B cell (primary cell): ENCODE measurements at regions of chr12 and their contacts with region 1.

Region 1: DNA sequence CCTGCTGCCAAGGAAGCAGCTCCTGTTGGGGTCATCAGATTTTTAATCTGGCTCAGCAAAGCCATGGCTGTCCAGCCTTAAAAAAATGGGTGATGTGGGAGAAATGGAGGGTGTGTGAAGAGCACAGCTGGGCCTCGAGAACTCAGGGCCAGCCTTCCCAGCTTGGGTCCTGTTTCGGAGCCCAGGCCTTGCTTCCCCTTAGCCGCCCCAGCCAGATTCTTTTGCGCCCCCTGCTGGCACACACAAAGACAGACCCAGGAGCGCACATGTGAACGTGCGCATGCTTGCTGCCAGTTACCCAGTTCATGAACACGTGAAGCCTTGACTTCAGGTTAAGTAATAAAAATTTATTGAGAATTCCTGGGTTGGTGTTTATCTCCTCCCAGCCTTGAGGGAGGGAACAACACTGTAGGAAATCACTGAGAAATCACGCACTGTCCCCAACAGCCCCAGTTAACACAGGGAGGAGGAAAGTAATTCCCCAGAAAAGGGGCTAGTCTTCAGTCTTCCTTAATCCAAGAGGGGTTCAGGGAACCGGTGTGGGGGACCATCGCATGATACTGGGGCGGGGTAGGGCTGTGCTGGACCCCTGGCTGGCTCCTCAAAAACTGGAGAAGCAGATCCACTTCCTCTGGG is 5.3 kb downstream of the PHB2 start:
- DNase-seq: peak; percentile 93
- ATAC-seq: peak; percentile 57
- H3K4me3 ChIP-seq: no peak overlapping the region
- H3K4me3 Mint-ChIP-seq: no peak overlapping the region
- H3K27ac ChIP-seq: peak overlapping the region; percentile 30 to 63
- H3K27ac Mint-ChIP-seq: peak overlapping the region; percentile 91
- H3K4me1 ChIP-seq: peaks cover 58 to 69% of the 10 kb centered on the region in 2 donors
- H3K4me1 Mint-ChIP-seq: peaks cover 63% of the 10 kb centered on the region
- H3K27me3 ChIP-seq: no peaks in the 10 kb centered on the region
- H3K27me3 Mint-ChIP-seq: no peaks in the 10 kb centered on the region
- CTCF ChIP-seq: peak; percentile 88

Region 2: DNA sequence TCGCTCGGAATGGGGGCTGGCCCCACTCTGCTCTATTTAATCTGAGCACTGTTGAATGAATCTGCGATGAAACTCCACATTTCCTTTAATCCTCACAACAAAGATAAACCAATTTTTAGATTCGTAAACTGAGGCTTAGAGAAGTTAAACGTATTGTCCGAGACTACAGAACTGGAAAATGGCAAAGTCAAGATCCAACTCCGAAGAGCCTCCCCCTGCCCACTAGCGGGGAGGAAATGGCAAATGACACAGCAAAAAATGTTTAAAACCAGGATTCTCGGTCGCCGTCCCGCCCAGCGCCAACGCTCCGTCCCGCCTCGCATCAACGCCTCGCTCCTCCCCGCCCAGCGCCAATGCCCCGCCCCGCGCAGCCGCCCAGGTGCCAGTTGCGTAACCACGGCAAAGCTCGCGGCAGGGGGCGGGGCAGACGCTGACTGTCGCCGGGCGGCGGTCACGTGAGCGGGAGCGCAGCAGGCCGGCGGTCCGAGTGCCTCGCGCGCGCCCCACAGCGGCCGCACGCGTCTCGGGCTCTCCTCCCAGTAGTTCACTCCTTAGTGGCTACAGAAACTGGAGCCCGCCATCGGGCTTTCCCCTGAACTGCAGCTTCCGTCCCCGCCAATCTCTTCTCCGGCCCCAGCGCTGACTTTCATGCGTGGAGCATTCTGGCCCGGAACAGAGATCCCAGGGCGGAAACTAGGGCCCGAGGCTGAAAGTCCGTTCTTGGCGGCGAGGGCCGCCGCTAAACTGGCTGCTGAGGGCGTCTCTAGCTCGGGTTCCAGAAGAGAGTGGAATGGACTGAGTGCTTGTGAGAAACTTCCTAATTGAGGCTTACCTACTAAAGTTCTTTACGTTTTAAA is 74.1 kb before region 1 on chr12:
- CTCF ChIA-PET with region 1: interaction called, 4 read pairs
- POLR2A ChIA-PET with region 1: no interaction called
- intact Hi-C with region 1: loop called (anchors 1 kb)
- DNase-seq: peak; percentile 98
- ATAC-seq: peak; percentile 95
- H3K4me3 ChIP-seq: peak overlapping the region; percentile 61 to 79 (median 76)
- H3K4me3 Mint-ChIP-seq: peak overlapping the region; percentile 87
- H3K27ac ChIP-seq: peak overlapping the region; percentile 93 to 94
- H3K27ac Mint-ChIP-seq: peak overlapping the region; percentile 91
- H3K4me1 ChIP-seq: peaks cover 9 to 13% of the 10 kb centered on the region in 2 donors
- H3K4me1 Mint-ChIP-seq: peaks cover 15% of the 10 kb centered on the region
- H3K27me3 ChIP-seq: no peaks in the 10 kb centered on the region
- H3K27me3 Mint-ChIP-seq: no peaks in the 10 kb centered on the region
- CTCF ChIP-seq: peak; percentile 90

Region 3: DNA sequence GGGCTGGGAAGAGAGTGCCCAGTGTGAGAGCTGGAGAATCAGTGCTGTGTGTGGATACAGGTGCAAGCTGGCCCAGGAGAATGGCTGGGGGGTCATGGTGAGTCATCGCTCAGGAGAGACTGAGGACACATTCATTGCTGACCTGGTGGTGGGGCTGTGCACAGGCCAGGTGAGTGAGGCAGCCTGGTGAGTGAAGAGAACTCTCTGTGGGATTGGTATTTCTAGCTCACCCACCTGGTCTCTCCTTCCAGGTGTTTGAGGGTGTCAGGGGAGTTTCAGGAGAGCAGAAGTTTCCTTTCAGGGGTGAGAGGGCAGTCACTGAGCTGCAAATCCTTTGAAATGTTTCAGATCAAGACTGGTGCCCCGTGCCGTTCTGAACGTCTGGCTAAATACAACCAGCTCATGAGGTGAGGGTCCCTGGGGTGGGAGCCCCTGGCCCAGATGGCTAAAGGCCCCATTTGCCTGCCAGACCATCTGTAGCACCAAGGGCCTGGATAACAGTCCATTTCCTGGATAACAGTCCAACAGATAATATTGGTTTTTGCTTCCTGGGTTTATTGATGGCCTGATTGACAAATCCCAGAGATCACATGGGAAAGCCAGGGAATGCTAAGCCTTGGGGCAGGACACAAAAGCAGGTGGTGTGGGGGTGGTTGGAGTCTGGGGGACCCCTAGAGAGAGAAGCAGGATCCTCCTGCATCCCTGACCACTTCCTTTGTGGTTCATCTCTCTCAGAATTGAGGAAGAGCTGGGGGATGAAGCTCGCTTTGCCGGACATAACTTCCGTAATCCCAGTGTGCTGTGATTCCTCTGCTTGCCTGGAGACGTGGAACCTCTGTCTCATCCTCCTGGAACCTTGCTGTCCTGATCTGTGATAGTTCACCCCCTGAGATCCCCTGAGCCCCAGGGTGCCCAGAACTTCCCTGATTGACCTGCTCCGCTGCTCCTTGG is 42.9 kb before region 1 on chr12:
- CTCF ChIA-PET with region 1: interaction called, 119 read pairs
- POLR2A ChIA-PET with region 1: interaction called, 9 read pairs
- intact Hi-C with region 1: loop called (anchors 1 kb)
- DNase-seq: peak; percentile 59
- ATAC-seq: peak; percentile 23
- H3K4me3 ChIP-seq: no peak overlapping the region
- H3K4me3 Mint-ChIP-seq: peak overlapping the region; percentile 60
- H3K27ac ChIP-seq: peak overlapping the region; percentile 54 to 57
- H3K27ac Mint-ChIP-seq: peak overlapping the region; percentile 41
- H3K4me1 ChIP-seq: peaks cover 39 to 50% of the 10 kb centered on the region in 2 donors
- H3K4me1 Mint-ChIP-seq: peaks cover 50% of the 10 kb centered on the region
- H3K27me3 ChIP-seq: no peaks in the 10 kb centered on the region
- H3K27me3 Mint-ChIP-seq: no peaks in the 10 kb centered on the region
- CTCF ChIP-seq: no peak

Region 4: DNA sequence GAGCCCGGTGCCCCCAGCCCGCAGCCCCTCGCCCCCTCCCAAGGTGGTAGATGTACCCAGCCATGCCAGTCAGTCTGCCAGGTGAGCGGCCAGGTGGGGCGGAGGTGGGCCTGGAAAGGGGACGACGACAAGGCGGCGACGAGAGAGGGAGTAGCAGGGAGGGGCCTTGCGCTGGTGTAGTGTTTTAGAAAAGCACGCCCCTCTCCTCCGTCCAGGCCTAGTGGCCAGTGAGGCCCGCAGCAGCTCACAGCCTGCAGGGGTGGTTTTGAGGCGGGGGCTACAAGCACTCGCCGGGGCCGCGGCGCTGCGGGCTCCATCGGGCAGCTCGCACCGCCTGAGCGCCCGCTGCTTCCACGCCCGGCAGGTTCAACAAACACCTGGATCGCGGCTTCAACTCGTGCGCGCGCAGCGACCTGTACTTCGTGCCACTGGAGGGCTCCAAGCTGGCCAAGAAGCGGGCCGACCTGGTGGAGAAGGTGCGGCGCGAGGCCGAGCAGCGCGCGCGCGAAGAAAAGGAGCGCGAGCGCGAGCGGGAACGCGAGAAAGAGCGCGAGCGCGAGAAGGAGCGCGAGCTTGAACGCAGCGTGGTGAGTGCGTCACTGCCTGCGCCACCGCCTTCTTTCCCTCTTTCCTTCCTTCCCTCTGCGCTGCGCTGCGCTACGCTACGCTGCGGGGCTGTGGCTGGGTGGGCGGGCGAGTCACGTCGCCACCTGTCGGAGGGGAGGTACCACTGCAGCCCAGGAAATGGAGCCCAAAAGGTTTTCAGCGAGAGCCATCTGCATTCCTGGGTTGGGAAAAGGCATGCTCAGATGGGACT is 27.5 kb before region 1 on chr12:
- CTCF ChIA-PET with region 1: interaction called, 944 read pairs
- POLR2A ChIA-PET with region 1: interaction called, 662 read pairs
- intact Hi-C with region 1: loop called (anchors 1 kb)
- DNase-seq: peak; percentile 98
- ATAC-seq: peak; percentile 91
- H3K4me3 ChIP-seq: peak overlapping the region; percentile 28 to 94 (median 80)
- H3K4me3 Mint-ChIP-seq: peak overlapping the region; percentile 87
- H3K27ac ChIP-seq: peak overlapping the region; percentile 88 to 91
- H3K27ac Mint-ChIP-seq: peak overlapping the region; percentile 97
- H3K4me1 ChIP-seq: peaks cover 17 to 31% of the 10 kb centered on the region in 2 donors
- H3K4me1 Mint-ChIP-seq: peaks cover 37% of the 10 kb centered on the region
- H3K27me3 ChIP-seq: no peaks in the 10 kb centered on the region
- H3K27me3 Mint-ChIP-seq: no peaks in the 10 kb centered on the region
- CTCF ChIP-seq: peak; percentile 92

Region 5: DNA sequence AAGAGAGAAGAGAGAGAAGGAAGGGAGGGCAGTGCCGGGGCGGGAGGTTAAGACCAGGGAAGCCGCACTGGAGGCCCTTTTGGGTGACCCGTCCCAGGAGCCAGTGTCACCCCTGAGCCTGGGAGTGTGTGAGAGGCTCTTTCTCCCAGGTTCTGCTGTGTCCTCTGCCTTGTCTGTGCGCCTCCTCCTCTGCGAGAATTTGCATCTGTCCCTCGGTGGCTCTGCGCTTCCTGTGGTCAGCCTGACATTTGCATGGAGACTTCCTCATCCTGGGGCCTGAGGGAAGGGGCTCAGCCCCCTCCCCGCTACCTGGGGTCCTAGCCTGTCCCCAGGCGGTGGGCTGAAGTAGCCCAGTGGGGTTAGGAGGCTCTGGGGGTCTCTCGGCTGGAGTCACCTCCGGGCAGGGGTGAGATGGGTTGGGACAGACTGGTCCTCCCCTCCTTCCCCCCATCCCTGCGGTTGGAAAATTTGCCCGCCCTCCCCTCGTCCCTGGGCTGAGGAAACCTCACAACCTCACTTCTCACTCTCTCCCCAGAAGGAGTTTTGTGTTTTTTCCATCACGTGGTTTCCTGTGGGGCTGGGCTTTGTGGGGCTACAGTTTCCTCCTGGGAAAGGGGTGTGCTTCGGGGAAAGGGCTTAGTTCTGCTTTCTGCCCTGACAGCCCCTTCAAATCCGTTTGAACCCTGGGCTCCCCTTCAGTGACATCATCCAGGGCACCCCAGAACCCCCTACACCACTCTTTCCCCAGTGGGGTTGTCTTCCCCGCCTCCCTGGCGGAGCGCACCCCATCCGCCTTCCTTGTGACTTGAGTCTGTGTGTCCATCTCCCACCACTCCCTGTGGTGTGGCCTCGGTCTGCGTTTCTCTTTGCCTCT is 11.5 kb before region 1 on chr12:
- CTCF ChIA-PET with region 1: interaction called, 944 read pairs
- POLR2A ChIA-PET with region 1: interaction called, 662 read pairs
- intact Hi-C with region 1: no loop called
- DNase-seq: peak; percentile 89
- ATAC-seq: peak; percentile 42
- H3K4me3 ChIP-seq: peak overlapping the region; percentile 88 to 98 (median 92)
- H3K4me3 Mint-ChIP-seq: peak overlapping the region; percentile 98
- H3K27ac ChIP-seq: peak overlapping the region; percentile 84 to 99
- H3K27ac Mint-ChIP-seq: peak overlapping the region; percentile 98
- H3K4me1 ChIP-seq: peaks cover 71 to 76% of the 10 kb centered on the region in 2 donors
- H3K4me1 Mint-ChIP-seq: peaks cover 88% of the 10 kb centered on the region
- H3K27me3 ChIP-seq: no peaks in the 10 kb centered on the region
- H3K27me3 Mint-ChIP-seq: no peaks in the 10 kb centered on the region
- CTCF ChIP-seq: no peak

Region 6: GRCh38 chr12:6978609-6979011 is 13.5 kb after region 1 on chr12:
- CTCF ChIA-PET with region 1: no interaction called
- POLR2A ChIA-PET with region 1: no interaction called
- intact Hi-C with region 1: no loop called
- DNase-seq: no peak
- ATAC-seq: no peak
- H3K4me3 ChIP-seq: no peak overlapping the region
- H3K4me3 Mint-ChIP-seq: no peak overlapping the region
- H3K27ac ChIP-seq: no peak overlapping the region
- H3K27ac Mint-ChIP-seq: no peak overlapping the region
- H3K4me1 ChIP-seq: no peaks in the 10 kb centered on the region
- H3K4me1 Mint-ChIP-seq: no peaks in the 10 kb centered on the region
- H3K27me3 ChIP-seq: no peaks in the 10 kb centered on the region
- H3K27me3 Mint-ChIP-seq: no peaks in the 10 kb centered on the region
- CTCF ChIP-seq: no peak

Region 7: DNA sequence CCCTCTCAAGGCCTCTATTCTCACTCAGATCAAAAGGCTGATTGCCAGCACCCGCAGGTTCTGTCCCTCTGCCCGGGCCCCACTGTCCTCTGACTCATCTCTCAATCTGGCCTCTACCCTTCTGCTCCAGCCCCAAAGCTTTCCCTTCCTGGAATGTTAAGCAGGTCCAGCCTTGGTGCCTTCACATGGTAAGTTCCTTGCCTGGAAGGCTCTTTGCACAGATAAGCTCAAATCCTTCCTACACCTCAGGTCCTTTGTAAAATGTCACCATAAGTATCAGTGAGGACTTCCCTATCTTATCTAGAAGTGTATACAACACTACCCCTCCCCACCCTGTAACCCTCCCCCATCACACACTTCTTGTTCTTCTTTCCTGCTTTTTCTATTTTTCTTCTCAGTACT is 30.9 kb after region 1 on chr12:
- CTCF ChIA-PET with region 1: no interaction called
- POLR2A ChIA-PET with region 1: no interaction called
- intact Hi-C with region 1: no loop called
- DNase-seq: no peak
- ATAC-seq: no peak
- H3K4me3 ChIP-seq: no peak overlapping the region
- H3K4me3 Mint-ChIP-seq: no peak overlapping the region
- H3K27ac ChIP-seq: no peak overlapping the region
- H3K27ac Mint-ChIP-seq: no peak overlapping the region
- H3K4me1 ChIP-seq: no peaks in the 10 kb centered on the region
- H3K4me1 Mint-ChIP-seq: no peaks in the 10 kb centered on the region
- H3K27me3 ChIP-seq: no peaks in the 10 kb centered on the region
- H3K27me3 Mint-ChIP-seq: no peaks in the 10 kb centered on the region
- CTCF ChIP-seq: no peak

Region 8: DNA sequence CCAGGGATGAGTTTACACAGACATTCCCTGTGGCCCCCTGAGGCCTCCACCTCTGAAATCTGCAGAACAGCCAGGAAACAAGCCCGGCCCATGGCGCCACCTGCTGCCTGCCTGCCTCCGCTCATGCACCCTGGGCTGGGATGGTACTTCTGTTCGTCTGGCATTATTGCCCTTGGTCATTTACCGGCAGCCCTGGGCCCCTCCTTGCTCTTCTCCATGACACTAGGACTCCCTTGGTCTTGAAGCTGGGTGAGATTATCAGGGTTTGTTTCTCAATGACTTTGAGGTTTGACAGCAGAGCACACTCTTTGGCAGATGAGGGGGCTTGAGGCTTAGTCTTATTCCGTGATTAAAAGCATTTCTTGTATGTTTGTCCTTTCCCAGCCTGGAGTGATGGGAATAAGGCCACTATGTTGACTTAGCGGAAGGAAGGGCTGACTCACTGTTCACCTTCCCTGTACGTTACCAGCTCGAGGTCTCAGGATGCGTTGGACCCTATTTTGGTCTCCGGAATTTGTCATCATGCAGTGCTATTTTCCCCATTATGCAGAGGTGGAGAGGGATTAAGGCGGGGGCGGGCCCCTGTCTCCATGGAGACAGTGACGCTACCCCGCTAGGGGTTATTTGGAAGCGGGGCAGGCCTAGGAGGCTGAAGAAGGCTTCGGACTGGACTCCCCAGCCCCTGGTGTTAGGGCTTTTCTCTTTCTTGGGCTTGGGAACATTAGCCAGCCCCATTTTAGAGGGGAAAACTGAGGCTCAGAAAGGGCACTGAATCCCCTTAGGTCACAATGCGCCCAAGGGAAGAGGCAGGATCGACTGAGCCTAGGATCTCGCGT is 223.6 kb after region 1 on chr12:
- CTCF ChIA-PET with region 1: no interaction called
- POLR2A ChIA-PET with region 1: no interaction called
- intact Hi-C with region 1: loop called (anchors 2 kb)
- DNase-seq: peak; percentile 67
- ATAC-seq: peak; percentile 15
- H3K4me3 ChIP-seq: peak overlapping the region; percentile 84 to 98 (median 94)
- H3K4me3 Mint-ChIP-seq: peak overlapping the region; percentile 93
- H3K27ac ChIP-seq: peak overlapping the region; percentile 82 to 85
- H3K27ac Mint-ChIP-seq: peak overlapping the region; percentile 92
- H3K4me1 ChIP-seq: peaks cover 18 to 23% of the 10 kb centered on the region in 2 donors
- H3K4me1 Mint-ChIP-seq: peaks cover 30% of the 10 kb centered on the region
- H3K27me3 ChIP-seq: no peaks in the 10 kb centered on the region
- H3K27me3 Mint-ChIP-seq: no peaks in the 10 kb centered on the region
- CTCF ChIP-seq: peak; percentile 68